T-cell (primary cell): ENCODE measurements at regions of chr1 and their contacts with region 1.

Region 1: DNA sequence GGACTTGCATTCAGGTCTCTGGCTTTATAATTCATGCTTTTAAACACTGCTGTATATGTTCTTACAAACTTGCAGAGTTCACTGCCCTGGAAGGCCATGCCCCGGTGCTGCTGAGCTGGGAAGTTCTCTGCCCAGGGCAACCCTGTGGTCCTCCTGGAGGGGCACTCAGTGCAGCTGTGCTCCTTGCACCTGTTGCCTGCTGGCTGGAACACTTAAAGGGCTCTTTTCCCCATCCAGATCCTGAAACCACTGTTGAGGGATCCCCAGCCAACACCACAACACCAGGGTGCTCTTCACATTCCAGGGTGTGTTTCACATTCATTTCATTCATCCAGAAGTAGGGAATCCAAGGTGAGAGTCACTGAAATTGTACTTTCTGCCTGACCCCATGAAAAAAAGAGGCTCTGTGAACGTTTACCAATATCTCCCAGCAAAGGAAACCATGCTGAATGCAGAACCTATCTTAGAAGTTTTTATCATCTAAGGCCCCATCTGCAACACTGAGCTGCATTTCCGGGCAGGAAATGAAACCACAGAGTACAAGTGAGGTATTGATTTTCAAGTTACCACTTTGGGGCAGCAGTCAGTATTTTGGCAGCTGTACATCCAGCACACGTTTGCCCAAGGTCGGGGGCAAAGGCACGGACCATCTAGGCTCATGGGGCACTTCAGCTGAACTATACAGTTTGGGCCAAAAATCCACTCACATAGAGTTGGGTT is 16.4 kb upstream of the KIAA0040 start:
- DNase-seq: peak; percentile 24 to 81 (median 55)
- ATAC-seq: peak; percentile 95 to 96 (median 96)
- H3K4me3 ChIP-seq: peak overlapping the region; percentile 6 to 60
- H3K4me3 Mint-ChIP-seq: peak overlapping the region; percentile 72 to 79 (median 76)
- H3K27ac ChIP-seq: peak overlapping the region; percentile 78
- H3K27ac Mint-ChIP-seq: peak overlapping the region; percentile 96 to 98
- H3K4me1 ChIP-seq: peaks cover 36 to 48% of the 10 kb centered on the region in 2 experiments
- H3K4me1 Mint-ChIP-seq: peaks cover 72 to 86% (median 86%) of the 10 kb centered on the region in 3 donors
- H3K27me3 ChIP-seq: no peaks in the 10 kb centered on the region
- H3K27me3 Mint-ChIP-seq: no peaks in the 10 kb centered on the region

Region 2: GRCh38 chr1:175192630-175193526 is 16.1 kb before region 1 on chr1 and contains the start of gene KIAA0040:
- CTCF ChIA-PET with region 1: interaction called, 5 to 19 read pairs
- POLR2A ChIA-PET with region 1: interaction called, 4 read pairs
- DNase-seq: peak in 32 of 35 experiments; percentile 8 to 74 (median 34)
- ATAC-seq: peak; percentile 61 to 71 (median 66)
- H3K4me3 ChIP-seq: peak within 1 kb of the TSS; percentile 63 to 97
- H3K4me3 Mint-ChIP-seq: peak within 1 kb of the TSS; percentile 86 to 98 (median 96)
- H3K27ac ChIP-seq: peak within 1 kb of the TSS; percentile 61
- H3K27ac Mint-ChIP-seq: peak within 1 kb of the TSS; percentile 88 to 95
- H3K4me1 ChIP-seq: peaks cover 34 to 47% of the 10 kb centered on the region in 2 experiments
- H3K4me1 Mint-ChIP-seq: peaks cover 51 to 66% (median 56%) of the 10 kb centered on the region in 3 donors
- H3K27me3 ChIP-seq: no peaks in the 10 kb centered on the region
- H3K27me3 Mint-ChIP-seq: no peaks in the 10 kb centered on the region
- total RNA-seq, gene KIAA0040: 33.0 to 60.0 (median 50.5) TPM